ENCODE measurements at regions of chr2 and their contacts with region 1.

Region 1: DNA sequence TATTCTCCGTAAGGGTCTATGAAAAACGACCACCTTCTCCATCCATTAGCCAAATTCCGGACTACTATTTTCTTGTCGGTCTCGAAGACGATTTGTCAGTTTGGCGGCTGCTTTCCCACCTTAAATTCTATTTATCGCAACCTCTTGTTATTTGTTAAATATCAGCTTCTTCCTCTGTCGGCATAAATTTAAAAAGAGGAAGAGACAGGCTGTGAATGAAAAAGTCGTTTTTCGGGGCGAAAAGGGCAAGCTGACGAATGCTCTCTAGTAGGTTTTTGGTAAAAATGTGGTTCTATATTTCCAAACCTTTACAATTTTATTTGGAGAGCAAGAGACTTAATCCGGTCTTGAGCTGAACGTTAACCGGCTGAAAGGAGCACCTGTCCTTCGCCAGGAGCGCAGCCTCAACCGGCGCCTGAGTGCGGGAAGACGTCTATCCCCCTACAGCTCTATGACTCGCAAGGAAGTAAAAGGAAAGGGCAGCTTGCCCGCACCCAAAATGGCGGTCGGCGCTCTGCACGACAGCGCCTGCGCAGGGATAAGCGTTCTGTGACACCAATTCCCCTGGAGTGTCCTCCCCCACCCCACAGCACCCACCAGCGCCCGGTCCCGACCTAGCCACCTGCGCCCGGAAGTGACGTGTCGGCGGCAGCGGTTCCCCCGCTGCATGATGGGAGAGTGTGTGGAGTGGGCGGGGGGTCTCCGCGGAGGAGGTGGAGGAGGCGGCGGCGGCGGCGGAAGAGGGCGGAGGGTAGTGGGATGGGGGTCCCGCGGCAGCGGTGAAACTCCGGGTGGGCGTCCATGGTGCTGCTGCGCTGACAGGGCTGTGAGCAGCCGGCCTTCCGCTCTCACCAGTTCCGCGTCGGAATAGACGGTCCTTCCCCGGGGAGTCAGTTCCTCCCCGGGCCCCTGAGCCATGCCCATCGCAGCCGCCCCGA is at the start of gene AFTPH:
- DNase-seq: peak; percentile 100
- H3K4me3 Mint-ChIP-seq: peak within 1 kb of the TSS; percentile 99
- H3K27ac Mint-ChIP-seq: peak within 1 kb of the TSS; percentile 98
- H3K4me1 Mint-ChIP-seq: peaks cover 31% of the 10 kb centered on the region
- H3K27me3 Mint-ChIP-seq: peaks cover 2% of the 10 kb centered on the region
- total RNA-seq, gene AFTPH: 34.8 to 36.4 TPM

Region 2: DNA sequence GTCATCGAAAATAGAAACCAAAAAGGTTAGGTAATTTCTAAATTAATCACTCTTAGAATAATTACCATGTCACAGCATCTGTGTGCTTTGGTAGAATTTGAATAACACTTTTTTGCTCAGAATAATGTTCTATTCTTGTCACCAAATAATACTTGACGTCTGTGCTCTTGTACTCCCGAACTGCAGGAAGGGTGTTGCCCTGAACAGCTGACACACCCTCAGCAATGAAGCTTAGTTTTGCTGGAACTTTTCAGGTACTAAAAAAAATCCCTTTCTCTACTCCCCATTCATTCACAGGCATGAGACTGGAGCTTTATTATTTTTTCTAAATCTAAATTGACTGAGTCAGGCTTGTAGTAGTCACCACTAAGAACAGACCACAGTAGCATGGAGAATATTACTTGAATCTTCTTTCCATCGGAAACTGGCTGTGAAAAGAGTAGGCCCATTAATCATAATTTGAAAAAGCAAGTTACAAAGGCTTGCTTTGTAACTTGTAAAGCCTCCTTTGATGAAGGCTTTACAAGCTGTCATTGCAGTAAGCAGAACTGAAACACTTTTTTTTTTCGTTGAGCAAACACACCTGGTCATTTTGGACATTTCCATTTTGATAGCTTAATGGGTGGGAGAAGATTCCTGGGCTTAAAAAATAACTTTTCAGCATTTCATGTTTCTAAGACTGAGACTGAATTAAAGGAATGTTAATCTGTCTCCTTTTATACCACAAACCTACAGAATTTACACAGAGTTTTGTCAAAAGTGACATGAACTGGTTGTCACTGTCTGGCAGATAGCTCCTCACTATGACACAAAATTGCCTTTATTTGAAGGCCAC is 309.4 kb before region 1 on chr2:
- CTCF ChIA-PET with region 1: no interaction called
- POLR2A ChIA-PET with region 1: no interaction called
- intact Hi-C with region 1: loop called (anchors 1 kb)
- DNase-seq: peak; percentile 59
- H3K4me3 Mint-ChIP-seq: peak overlapping the region; percentile 63
- H3K27ac Mint-ChIP-seq: peak overlapping the region; percentile 97
- H3K4me1 Mint-ChIP-seq: peaks cover 56% of the 10 kb centered on the region
- H3K27me3 Mint-ChIP-seq: no peaks in the 10 kb centered on the region

Region 3: DNA sequence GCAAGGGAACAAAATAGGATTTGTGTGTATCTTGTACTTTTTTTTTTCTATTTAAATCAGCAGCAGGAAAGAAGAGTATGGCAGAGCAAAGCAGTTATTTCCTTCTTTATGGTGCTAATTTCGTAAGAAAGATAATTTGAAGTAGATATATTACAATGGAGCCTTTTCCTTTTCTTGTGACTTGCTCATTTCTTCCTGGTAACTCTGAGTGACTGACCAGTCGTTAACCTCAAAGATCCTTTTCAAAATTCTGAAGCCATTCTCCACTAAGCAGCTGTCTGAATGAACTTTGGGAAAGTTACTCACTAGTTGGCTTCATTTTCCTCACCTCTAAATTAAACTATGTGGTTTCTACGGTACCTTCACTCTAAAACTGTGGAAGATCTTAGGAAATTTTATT is 24.8 kb after region 1 on chr2:
- CTCF ChIA-PET with region 1: interaction called, 161 read pairs
- POLR2A ChIA-PET with region 1: interaction called, 3 read pairs
- intact Hi-C with region 1: no loop called
- DNase-seq: no peak
- H3K4me3 Mint-ChIP-seq: no peak overlapping the region
- H3K27ac Mint-ChIP-seq: no peak overlapping the region
- H3K4me1 Mint-ChIP-seq: peaks cover 18% of the 10 kb centered on the region
- H3K27me3 Mint-ChIP-seq: no peaks in the 10 kb centered on the region

Region 4: GRCh38 chr2:64609227-64609941 is 85.4 kb after region 1 on chr2:
- CTCF ChIA-PET with region 1: interaction called, 32 read pairs
- POLR2A ChIA-PET with region 1: interaction called, 18 read pairs
- intact Hi-C with region 1: loop called (anchors 1 kb)
- DNase-seq: peak; percentile 75
- H3K4me3 Mint-ChIP-seq: peak overlapping the region; percentile 57
- H3K27ac Mint-ChIP-seq: no peak overlapping the region
- H3K4me1 Mint-ChIP-seq: peaks cover 26% of the 10 kb centered on the region
- H3K27me3 Mint-ChIP-seq: no peaks in the 10 kb centered on the region

Region 5: GRCh38 chr2:64698668-64699444 is 174.9 kb after region 1 on chr2:
- CTCF ChIA-PET with region 1: no interaction called
- POLR2A ChIA-PET with region 1: no interaction called
- intact Hi-C with region 1: loop called (anchors 1 kb)
- DNase-seq: no peak
- H3K4me3 Mint-ChIP-seq: peak overlapping the region; percentile 47
- H3K27ac Mint-ChIP-seq: peak overlapping the region; percentile 72
- H3K4me1 Mint-ChIP-seq: peaks cover 41% of the 10 kb centered on the region
- H3K27me3 Mint-ChIP-seq: no peaks in the 10 kb centered on the region

Region 6: GRCh38 chr2:64865073-64865830 is 341.3 kb after region 1 on chr2:
- CTCF ChIA-PET with region 1: interaction called, 14 read pairs
- POLR2A ChIA-PET with region 1: interaction called, 4 read pairs
- intact Hi-C with region 1: loop called (anchors 1 kb)
- DNase-seq: peak; percentile 72
- H3K4me3 Mint-ChIP-seq: peak overlapping the region; percentile 57
- H3K27ac Mint-ChIP-seq: no peak overlapping the region
- H3K4me1 Mint-ChIP-seq: no peaks in the 10 kb centered on the region
- H3K27me3 Mint-ChIP-seq: peaks cover 5% of the 10 kb centered on the region

Region 7: DNA sequence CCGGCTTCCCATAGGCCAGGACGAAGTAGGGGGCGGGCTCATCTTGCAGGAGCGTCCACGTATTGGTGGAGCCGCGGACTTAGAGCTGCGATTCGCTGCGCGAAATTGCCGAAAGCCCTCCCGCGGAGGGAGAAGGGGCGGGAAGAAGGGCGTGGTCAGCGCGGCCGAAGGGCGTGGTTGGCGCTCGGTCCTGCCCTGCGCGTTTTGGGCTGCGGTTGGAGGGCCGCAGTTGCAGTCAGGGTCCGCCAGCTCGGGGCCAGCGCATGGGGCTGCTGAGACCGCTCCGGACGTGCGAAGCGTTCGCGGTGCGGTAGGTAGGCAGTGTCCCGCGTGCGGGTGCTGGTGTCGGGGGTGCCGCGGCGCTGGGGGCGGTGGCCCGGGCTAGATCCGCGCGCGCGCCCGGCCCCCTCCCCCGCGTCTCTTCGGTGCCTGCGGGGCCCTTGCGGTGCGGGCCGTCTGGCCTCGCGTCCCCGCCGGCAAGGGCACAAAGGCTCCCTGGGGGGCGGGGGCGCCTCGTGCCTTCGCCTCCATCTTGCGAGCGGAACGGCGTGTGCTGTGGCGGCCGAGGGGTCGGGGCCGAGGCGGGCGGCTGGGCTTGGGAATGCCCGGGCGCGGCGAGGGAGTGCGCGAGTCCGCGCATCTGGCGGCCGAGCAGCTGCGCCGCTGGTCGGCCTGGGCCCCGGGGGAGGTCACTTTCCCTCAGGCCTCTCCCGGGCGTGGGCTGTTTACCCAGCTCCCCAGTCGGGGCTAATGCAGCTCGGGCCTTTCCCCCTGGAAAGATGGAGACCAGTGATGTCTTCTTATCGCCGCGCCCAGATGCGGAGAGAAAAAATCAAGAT is 532.5 kb after region 1 on chr2 and contains the start of gene CEP68:
- CTCF ChIA-PET with region 1: no interaction called
- POLR2A ChIA-PET with region 1: no interaction called
- intact Hi-C with region 1: loop called (anchors 2 kb)
- DNase-seq: peak; percentile 98
- H3K4me3 Mint-ChIP-seq: peak within 1 kb of the TSS; percentile 94
- H3K27ac Mint-ChIP-seq: peak within 1 kb of the TSS; percentile 78
- H3K4me1 Mint-ChIP-seq: peaks cover 50% of the 10 kb centered on the region
- H3K27me3 Mint-ChIP-seq: no peaks in the 10 kb centered on the region
- total RNA-seq, gene CEP68: 6.6 to 8.0 TPM

Measured in activated CD4-positive, alpha-beta memory T cell treated with anti-CD3 and anti-CD28 coated beads for 36 hours (primary cell).